GM12878 (cell line): ENCODE measurements at regions of chr3 and their contacts with region 1.

Region 1: DNA sequence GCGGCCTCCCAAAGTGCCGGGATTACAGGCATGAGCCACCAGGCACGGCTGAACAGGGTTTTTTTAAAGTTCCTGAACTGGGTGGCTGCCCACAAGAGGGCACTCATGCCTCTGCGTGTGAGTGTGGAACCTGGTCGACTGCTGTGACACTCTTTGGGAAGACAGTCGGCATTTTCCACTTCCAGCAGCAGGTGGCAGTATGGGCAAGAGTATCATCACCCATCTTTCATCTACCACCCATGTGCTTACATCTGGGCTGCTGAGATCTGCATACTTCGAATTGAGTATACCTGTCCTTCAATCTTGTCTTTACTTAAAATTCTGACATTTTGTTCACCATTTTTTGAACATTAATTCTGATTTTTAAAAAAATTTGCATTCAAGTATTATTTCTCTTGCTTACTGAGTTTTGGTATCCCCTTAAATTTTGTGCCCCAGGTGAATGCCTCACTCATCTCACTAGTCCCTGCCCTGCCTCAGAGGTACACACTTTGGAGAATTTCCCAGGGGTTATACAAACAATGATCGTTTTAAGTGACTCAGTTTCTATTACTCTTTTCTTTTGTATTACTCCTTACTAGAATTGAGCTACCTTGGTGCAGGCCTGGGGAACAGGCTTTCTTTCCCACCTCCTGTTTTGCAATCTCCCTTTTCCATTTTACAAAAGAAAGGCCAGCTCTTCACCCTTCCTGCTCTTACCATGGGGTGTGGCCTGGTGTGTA is 11.8 kb downstream of the CLEC3B start:
- DNase-seq: peak; percentile 95
- ATAC-seq: peak; percentile 75
- H3K4me3 ChIP-seq: no peak overlapping the region
- H3K27ac ChIP-seq: no peak overlapping the region
- H3K4me1 ChIP-seq: peaks cover 21% of the 10 kb centered on the region
- H3K27me3 ChIP-seq: no peaks in the 10 kb centered on the region; a peak in 2 of 4 replicates
- CTCF ChIP-seq: peak; percentile 91 to 96 (median 94)
- EP300 ChIP-seq: no peak
- POLR2A ChIP-seq: no peak
- RAD21 ChIP-seq: peak; percentile 86

Region 2: GRCh38 chr3:44323341-44323955 is 714.4 kb before region 1 on chr3:
- CTCF ChIA-PET with region 1: no interaction called
- POLR2A ChIA-PET with region 1: no interaction called
- RAD21 ChIA-PET with region 1: no interaction called
- SMC1A ChIA-PET with region 1: no interaction called
- in situ Hi-C with region 1: no loop called
- intact Hi-C with region 1: no loop called
- DNase-seq: no peak
- ATAC-seq: peak; percentile 56
- H3K4me3 ChIP-seq: no peak overlapping the region
- H3K27ac ChIP-seq: no peak overlapping the region
- H3K4me1 ChIP-seq: no peaks in the 10 kb centered on the region
- H3K27me3 ChIP-seq: no peaks in the 10 kb centered on the region
- CTCF ChIP-seq: peak; percentile 73 to 83 (median 76)
- EP300 ChIP-seq: no peak
- POLR2A ChIP-seq: no peak
- RAD21 ChIP-seq: peak; percentile 98

Region 3: DNA sequence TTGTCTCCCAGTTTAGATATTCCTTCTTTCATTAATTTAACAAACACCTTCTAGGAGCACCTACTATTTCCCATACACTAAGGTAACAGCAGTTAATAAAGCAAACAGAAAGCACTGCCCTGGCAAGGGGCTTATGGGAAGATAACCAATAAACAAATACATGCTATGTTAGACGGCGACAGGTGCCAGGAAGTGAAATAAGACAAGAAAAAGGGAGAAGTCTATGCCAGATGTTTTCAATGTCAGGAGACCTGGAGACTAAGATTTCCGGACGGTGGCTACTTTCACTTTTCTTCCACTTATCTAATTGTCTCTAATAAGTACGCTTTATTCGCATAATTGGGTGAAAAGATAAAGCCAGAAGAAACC is 527.9 kb before region 1 on chr3:
- CTCF ChIA-PET with region 1: no interaction called
- POLR2A ChIA-PET with region 1: no interaction called
- RAD21 ChIA-PET with region 1: no interaction called
- SMC1A ChIA-PET with region 1: no interaction called
- in situ Hi-C with region 1: no loop called
- intact Hi-C with region 1: no loop called
- DNase-seq: no peak
- ATAC-seq: peak; percentile 61
- H3K4me3 ChIP-seq: peak overlapping the region; percentile 81
- H3K27ac ChIP-seq: peak overlapping the region; percentile 81
- H3K4me1 ChIP-seq: peaks cover 8% of the 10 kb centered on the region
- H3K27me3 ChIP-seq: no peaks in the 10 kb centered on the region
- CTCF ChIP-seq: no peak
- EP300 ChIP-seq: no peak
- POLR2A ChIP-seq: no peak
- RAD21 ChIP-seq: no peak

Region 4: GRCh38 chr3:44729384-44729910 is 308.4 kb before region 1 on chr3 and contains the start of gene ZNF501:
- CTCF ChIA-PET with region 1: no interaction called
- POLR2A ChIA-PET with region 1: no interaction called
- RAD21 ChIA-PET with region 1: no interaction called
- SMC1A ChIA-PET with region 1: no interaction called
- in situ Hi-C with region 1: no loop called
- intact Hi-C with region 1: no loop called
- DNase-seq: peak; percentile 42
- ATAC-seq: peak; percentile 100
- H3K4me3 ChIP-seq: peak within 1 kb of the TSS; percentile 57
- H3K27ac ChIP-seq: no peak within 1 kb of the TSS
- H3K4me1 ChIP-seq: no peaks in the 10 kb centered on the region
- H3K27me3 ChIP-seq: no peaks in the 10 kb centered on the region
- CTCF ChIP-seq: no peak
- EP300 ChIP-seq: no peak
- POLR2A ChIP-seq: peak; percentile 83
- RAD21 ChIP-seq: no peak
- polyA plus RNA-seq, gene ZNF501: 0.35 to 0.40 TPM

Region 5: GRCh38 chr3:45011756-45012508 is 26.0 kb before region 1 on chr3:
- CTCF ChIA-PET with region 1: interaction called, 6 read pairs
- POLR2A ChIA-PET with region 1: no interaction called
- RAD21 ChIA-PET with region 1: interaction called, 18 read pairs
- SMC1A ChIA-PET with region 1: interaction called, 5 read pairs
- in situ Hi-C with region 1: no loop called
- intact Hi-C with region 1: no loop called
- DNase-seq: no peak
- ATAC-seq: peak; percentile 89
- H3K4me3 ChIP-seq: no peak overlapping the region
- H3K27ac ChIP-seq: no peak overlapping the region; the same call in 1 of the 2 replicates
- H3K4me1 ChIP-seq: peaks cover 15% of the 10 kb centered on the region
- H3K27me3 ChIP-seq: no peaks in the 10 kb centered on the region
- CTCF ChIP-seq: no peak
- EP300 ChIP-seq: 0 out of 4 replicates have a peak, but pooled peaks of 1 of the 2 experiments have one; percentile 28
- POLR2A ChIP-seq: no peak
- RAD21 ChIP-seq: no peak

Region 6: GRCh38 chr3:45055411-45056143 is 17.7 kb after region 1 on chr3:
- CTCF ChIA-PET with region 1: interaction called, 282 read pairs
- POLR2A ChIA-PET with region 1: interaction called, 3 read pairs
- RAD21 ChIA-PET with region 1: interaction called, 101 read pairs
- SMC1A ChIA-PET with region 1: interaction called, 120 read pairs
- in situ Hi-C with region 1: no loop called
- intact Hi-C with region 1: no loop called
- DNase-seq: no peak
- ATAC-seq: peak; percentile 86
- H3K4me3 ChIP-seq: no peak overlapping the region
- H3K27ac ChIP-seq: no peak overlapping the region
- H3K4me1 ChIP-seq: no peaks in the 10 kb centered on the region
- H3K27me3 ChIP-seq: no peaks in the 10 kb centered on the region
- CTCF ChIP-seq: peak; percentile 36 to 49 (median 43); a peak in 4 of 6 replicates
- EP300 ChIP-seq: no peak
- POLR2A ChIP-seq: no peak
- RAD21 ChIP-seq: peak; percentile 55

Region 7: DNA sequence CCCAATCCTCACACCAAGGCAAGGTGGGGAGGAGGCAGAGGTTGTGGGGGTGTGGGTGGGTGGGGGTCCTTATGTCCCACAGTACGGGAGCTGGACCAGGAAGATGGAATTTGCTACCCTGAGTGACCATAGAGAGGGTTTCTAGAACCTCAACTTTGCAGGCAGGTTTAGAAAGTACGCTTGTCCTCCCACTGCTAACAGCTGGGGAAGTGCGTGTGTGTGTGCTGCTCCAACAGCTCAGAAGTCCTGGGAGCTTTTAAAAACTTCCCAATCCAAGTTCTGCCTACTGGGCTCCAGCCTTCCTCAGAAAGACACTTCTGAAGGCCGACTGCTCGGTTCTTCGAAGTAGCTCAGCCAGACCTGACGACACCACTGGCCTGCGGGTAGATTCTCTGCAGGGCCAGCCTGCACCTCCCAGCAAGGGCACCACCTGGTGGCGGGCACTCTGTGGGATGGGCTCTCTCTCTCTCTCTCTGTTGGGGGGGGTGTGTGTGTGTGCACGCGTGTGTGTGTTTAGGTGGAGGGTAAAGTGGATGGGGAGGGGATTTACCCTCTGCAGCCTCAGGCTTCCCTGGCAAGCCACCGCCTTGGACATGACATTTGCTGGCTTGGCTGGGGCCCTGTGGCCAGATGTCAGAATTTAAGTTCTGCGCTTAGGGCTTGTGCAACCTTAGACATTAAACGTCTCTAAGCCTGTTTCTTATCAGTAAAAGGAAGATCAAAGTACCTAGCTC is 172.6 kb after region 1 on chr3:
- CTCF ChIA-PET with region 1: interaction called, 416 read pairs
- POLR2A ChIA-PET with region 1: interaction called, 13 read pairs
- RAD21 ChIA-PET with region 1: interaction called, 166 read pairs
- SMC1A ChIA-PET with region 1: interaction called, 241 read pairs
- in situ Hi-C with region 1: loop called (anchors 5 kb)
- intact Hi-C with region 1: loop called (anchors 1 kb)
- DNase-seq: no peak
- ATAC-seq: peak; percentile 98
- H3K4me3 ChIP-seq: no peak overlapping the region
- H3K27ac ChIP-seq: no peak overlapping the region
- H3K4me1 ChIP-seq: no peaks in the 10 kb centered on the region
- H3K27me3 ChIP-seq: peaks cover 2 to 3% of the 10 kb centered on the region in 2 experiments; a peak in 3 of 4 replicates
- CTCF ChIP-seq: peak; percentile 60 to 75 (median 70); a peak in 5 of 6 replicates
- EP300 ChIP-seq: no peak
- POLR2A ChIP-seq: no peak
- RAD21 ChIP-seq: peak; percentile 44

Region 8: GRCh38 chr3:45499529-45499928 is 461.6 kb after region 1 on chr3:
- CTCF ChIA-PET with region 1: interaction called, 26 read pairs
- POLR2A ChIA-PET with region 1: interaction called, 3 read pairs
- RAD21 ChIA-PET with region 1: interaction called, 9 read pairs
- SMC1A ChIA-PET with region 1: interaction called, 15 read pairs
- in situ Hi-C with region 1: loop called (anchors 5 kb)
- intact Hi-C with region 1: loop called (anchors 2 kb)
- DNase-seq: no peak
- ATAC-seq: no peak
- H3K4me3 ChIP-seq: no peak overlapping the region
- H3K27ac ChIP-seq: no peak overlapping the region
- H3K4me1 ChIP-seq: no peaks in the 10 kb centered on the region
- H3K27me3 ChIP-seq: no peaks in the 10 kb centered on the region
- CTCF ChIP-seq: peak in 1 of 3 experiments; percentile 22; a peak in 2 of 6 replicates
- EP300 ChIP-seq: no peak
- POLR2A ChIP-seq: no peak
- RAD21 ChIP-seq: peak; percentile 40

Region 9: GRCh38 chr3:45929042-45929679 is 891.3 kb after region 1 on chr3:
- CTCF ChIA-PET with region 1: interaction called, 6 read pairs
- POLR2A ChIA-PET with region 1: no interaction called
- RAD21 ChIA-PET with region 1: interaction called, 4 read pairs
- SMC1A ChIA-PET with region 1: no interaction called
- in situ Hi-C with region 1: loop called (anchors 5 kb)
- intact Hi-C with region 1: no loop called
- DNase-seq: no peak
- ATAC-seq: peak; percentile 100
- H3K4me3 ChIP-seq: no peak overlapping the region
- H3K27ac ChIP-seq: no peak overlapping the region
- H3K4me1 ChIP-seq: no peaks in the 10 kb centered on the region; the same call in 1 of the 2 replicates
- H3K27me3 ChIP-seq: no peaks in the 10 kb centered on the region
- CTCF ChIP-seq: peak; percentile 94 to 98 (median 97); a peak in 5 of 6 replicates
- EP300 ChIP-seq: no peak
- POLR2A ChIP-seq: no peak
- RAD21 ChIP-seq: peak; percentile 99